GM10248 (cell line): ENCODE measurements at regions of chrX and their contacts with region 1.

Region 1: DNA sequence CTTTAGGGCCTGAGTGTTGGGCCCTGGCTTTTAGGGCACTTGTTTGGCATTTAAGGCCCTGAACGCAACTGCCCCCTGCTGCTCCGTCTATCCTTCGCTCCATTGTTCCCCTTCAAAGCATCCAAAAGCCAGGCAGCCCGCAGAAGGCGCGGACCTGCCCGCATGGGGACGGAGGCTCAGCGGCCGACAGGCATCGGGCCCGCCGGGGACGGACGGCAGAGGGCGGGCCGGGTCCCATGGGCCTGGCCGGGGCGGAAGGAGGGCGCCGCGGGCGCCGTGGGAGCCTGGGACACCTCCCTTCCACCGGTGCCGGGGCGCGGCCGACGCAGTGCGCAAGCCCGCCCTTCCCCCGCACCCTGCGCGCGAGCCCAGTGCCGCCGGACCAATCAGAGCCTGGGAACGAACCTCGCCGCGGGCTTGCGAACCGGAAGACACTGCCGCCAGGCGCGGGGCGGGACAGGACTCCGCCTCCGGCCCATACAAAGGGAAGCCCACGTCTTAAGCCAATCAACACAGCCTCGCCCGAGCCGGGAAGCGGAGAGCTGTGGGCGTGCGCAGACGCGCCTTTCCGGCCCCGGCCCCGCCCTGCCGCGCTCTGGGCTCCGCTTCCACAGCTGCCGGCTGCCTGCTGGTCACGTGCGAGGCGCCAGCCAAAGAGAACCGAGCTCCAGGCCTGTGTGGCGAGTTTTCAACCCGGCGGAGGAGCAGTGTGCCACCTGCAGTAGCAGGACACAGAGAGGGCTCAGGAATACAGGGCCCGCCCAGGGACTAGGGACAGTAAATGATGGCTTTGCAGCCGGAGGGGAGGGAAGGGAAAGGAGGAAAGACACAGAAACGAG is 2.1 kb upstream of the ARHGAP4 start:
- DNase-seq: peak; percentile 97
- CTCF ChIP-seq: no peak

Region 2: GRCh38 chrX:153611298-153612095 is 316.6 kb before region 1 on chrX:
- CTCF ChIA-PET with region 1: no interaction called
- POLR2A ChIA-PET with region 1: no interaction called
- DNase-seq: no peak
- CTCF ChIP-seq: no peak

Region 3: DNA sequence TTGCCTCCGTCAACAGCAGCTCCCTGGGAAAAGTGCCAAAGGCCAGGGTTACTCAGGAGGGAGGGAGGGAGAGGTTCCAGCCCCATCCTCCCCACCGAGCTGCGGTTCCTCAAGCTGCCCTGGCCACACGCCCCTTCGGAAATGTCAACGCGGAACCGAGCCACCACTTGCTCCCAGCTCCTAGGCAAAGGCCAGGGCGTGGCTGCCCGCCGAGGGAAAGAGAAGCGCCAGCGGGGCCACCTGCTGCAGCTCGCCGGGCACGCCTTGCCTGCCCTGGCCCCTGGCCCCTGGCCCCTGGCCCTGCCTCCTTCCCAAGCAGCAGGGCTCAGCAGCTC is 225.1 kb before region 1 on chrX:
- CTCF ChIA-PET with region 1: no interaction called
- POLR2A ChIA-PET with region 1: no interaction called
- DNase-seq: no peak
- CTCF ChIP-seq: no peak

Region 4: DNA sequence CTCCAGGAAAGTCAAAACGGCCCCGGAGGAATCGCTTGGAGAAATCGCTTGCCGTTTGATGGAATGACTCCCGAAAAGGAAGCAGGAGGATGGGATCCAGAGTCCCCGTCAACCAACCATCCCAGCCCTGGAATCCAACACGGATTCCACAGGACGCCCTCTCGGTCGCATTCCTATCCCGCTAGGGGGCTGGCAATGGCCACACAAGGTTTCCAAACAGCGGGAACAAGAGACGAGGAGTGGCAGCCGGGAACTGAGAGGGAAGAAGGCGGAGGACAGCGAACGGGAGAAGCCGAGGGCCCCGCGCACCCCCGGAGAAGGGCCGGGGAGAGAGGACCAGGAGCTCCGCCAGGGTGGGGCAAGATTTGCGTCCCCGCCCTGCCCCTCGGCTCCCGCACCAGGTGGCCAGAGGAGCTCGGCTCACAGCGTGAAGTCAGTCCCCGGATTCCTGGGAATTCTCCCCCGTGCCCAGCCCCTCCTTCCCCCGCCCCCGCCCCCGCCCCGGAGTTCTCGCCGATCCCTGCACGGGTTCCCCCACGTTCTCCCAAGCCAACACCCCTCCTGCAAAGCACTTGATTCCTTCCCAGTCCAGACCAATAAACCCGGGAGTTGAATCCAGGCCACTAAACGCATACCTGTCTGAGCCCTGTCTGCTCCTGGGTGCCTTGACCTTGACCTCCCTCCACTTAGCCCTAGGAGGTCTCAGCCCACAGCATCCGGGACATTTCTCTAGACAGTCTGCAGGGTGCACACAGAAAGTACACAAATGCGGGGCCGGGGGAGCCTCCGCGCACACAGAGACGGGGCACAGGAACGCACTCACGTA is 99.2 kb before region 1 on chrX:
- CTCF ChIA-PET with region 1: no interaction called
- POLR2A ChIA-PET with region 1: no interaction called
- DNase-seq: peak; percentile 14
- CTCF ChIP-seq: no peak

Region 5: GRCh38 chrX:153909024-153909970 is 18.8 kb before region 1 on chrX:
- CTCF ChIA-PET with region 1: interaction called, 26 read pairs
- POLR2A ChIA-PET with region 1: no interaction called
- DNase-seq: peak; percentile 50
- CTCF ChIP-seq: no peak